H1 (cell line): ENCODE measurements at regions of chr14 and their contacts with region 1.

Region 1: DNA sequence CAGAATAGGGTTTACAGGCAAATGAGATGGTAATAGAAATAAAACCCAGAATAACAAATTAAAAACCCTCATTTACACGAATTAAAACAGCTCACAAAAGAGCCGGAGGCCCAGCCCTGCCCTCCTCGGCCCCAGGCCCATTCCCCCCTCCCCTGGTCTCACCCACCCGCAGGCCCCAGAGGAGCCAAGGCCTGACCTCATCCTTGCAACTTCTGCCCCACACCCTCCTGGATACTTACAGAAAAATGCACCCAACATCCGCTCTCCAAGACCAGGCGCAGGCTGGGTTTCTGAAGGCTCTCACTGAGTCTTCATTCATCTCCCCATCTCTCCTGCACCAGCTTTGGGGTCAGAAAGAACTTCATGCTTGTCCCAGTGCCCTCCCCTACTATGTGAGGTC is 16.2 kb upstream of the VSX2 start:
- DNase-seq: no peak
- H3K4me3 ChIP-seq: no peak overlapping the region
- H3K27ac ChIP-seq: no peak overlapping the region
- H3K4me1 ChIP-seq: no peaks in the 10 kb centered on the region
- H3K27me3 ChIP-seq: peaks cover 0 to 7% (median 6%) of the 10 kb centered on the region in 4 experiments; a peak in 5 of 7 replicates
- CTCF ChIP-seq: no peak
- EP300 ChIP-seq: no peak
- POLR2A ChIP-seq: no peak
- RAD21 ChIP-seq: no peak

Region 2: GRCh38 chr14:74249433-74250375 is 26.7 kb after region 1 on chr14:
- CTCF ChIA-PET with region 1: interaction called, 139 read pairs
- POLR2A ChIA-PET with region 1: no interaction called
- DNase-seq: no peak
- H3K4me3 ChIP-seq: no peak overlapping the region
- H3K27ac ChIP-seq: no peak overlapping the region
- H3K4me1 ChIP-seq: peaks cover 0 to 5% (median under 1%) of the 10 kb centered on the region in 4 experiments; a peak in 3 of 7 replicates
- H3K27me3 ChIP-seq: peaks cover 0 to 8% (median 5%) of the 10 kb centered on the region in 4 experiments; a peak in 3 of 7 replicates
- CTCF ChIP-seq: no peak
- EP300 ChIP-seq: no peak
- POLR2A ChIP-seq: no peak
- RAD21 ChIP-seq: no peak